ENCODE measurements at regions of chr2 and their contacts with region 1.

Region 1: DNA sequence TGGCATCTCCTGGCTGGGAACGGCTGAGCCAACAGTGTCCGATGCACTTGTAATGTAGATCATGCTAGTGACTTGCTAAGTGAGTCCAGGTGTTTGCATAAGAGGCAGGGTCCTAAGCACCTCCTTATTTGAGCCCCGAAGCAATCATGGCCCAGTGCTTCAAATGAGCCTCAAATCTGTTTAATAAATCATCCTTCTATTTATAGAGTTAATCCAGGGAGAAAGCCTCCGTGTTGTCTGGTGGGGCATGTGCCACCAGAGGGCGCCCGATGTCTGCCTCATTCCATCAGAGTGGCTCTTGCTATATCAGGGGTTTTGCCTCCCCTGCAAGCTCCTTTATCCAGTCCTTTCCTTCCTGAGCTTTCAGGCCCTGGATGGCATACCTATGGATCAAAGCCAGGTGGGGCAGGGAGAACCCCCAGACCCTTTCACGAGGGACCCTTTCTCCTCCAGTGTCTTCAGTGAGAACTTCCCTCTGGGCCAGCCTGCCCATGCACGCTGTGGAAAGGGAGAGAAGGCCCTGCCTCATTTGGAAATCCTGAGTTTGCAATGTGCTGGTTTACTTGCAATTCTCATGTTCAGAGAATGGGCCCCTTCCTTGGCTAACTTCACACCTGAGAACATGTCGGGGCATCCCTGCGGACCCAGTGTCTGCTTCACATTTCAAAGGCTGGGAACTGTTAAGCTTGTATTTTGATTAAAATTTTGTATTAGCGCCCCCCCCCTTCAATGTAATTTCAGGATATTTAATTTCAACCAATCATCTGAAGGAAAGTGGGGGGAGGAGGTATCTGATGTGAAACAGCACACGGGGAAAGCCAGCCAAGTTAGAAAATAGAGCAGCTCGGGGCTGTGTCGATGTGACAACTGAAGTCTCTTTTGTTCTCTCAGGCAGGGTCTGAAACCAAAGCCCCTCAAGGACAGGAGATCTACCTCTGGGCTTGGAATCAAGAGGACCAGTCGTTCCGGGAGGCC is 39.7 kb downstream of the RDH14 start:
- DNase-seq: peak; percentile 63 to 93
- H3K4me3 ChIP-seq: no peak overlapping the region
- H3K27ac ChIP-seq: no peak overlapping the region
- H3K4me1 ChIP-seq: peaks cover 0 to 3% (median 0%) of the 10 kb centered on the region in 4 experiments; a peak in 4 of 7 replicates
- H3K27me3 ChIP-seq: no peaks in the 10 kb centered on the region
- CTCF ChIP-seq: peak; percentile 79 to 91 (median 85)
- EP300 ChIP-seq: no peak
- POLR2A ChIP-seq: no peak
- RAD21 ChIP-seq: peak; percentile 97 to 99

Region 2: GRCh38 chr2:18435421-18436037 is 85.2 kb before region 1 on chr2:
- CTCF ChIA-PET with region 1: interaction called, 10 read pairs
- POLR2A ChIA-PET with region 1: no interaction called
- DNase-seq: peak in 1 of 2 experiments; percentile 53
- H3K4me3 ChIP-seq: no peak overlapping the region
- H3K27ac ChIP-seq: no peak overlapping the region
- H3K4me1 ChIP-seq: no peaks in the 10 kb centered on the region
- H3K27me3 ChIP-seq: no peaks in the 10 kb centered on the region
- CTCF ChIP-seq: peak in 2 of 3 experiments; percentile 46 to 69; a peak in 2 of 4 replicates
- EP300 ChIP-seq: no peak
- POLR2A ChIP-seq: no peak
- RAD21 ChIP-seq: peak; percentile 80 to 83

Region 3: GRCh38 chr2:18484625-18485024 is 36.1 kb before region 1 on chr2:
- CTCF ChIA-PET with region 1: no interaction called
- POLR2A ChIA-PET with region 1: no interaction called
- DNase-seq: no peak
- H3K4me3 ChIP-seq: no peak overlapping the region
- H3K27ac ChIP-seq: no peak overlapping the region
- H3K4me1 ChIP-seq: no peaks in the 10 kb centered on the region
- H3K27me3 ChIP-seq: no peaks in the 10 kb centered on the region
- CTCF ChIP-seq: no peak
- EP300 ChIP-seq: no peak
- POLR2A ChIP-seq: no peak
- RAD21 ChIP-seq: no peak

Region 4: GRCh38 chr2:18552351-18553077 is 31.8 kb after region 1 on chr2:
- CTCF ChIA-PET with region 1: interaction called, 17 read pairs
- POLR2A ChIA-PET with region 1: no interaction called
- DNase-seq: no peak
- H3K4me3 ChIP-seq: no peak overlapping the region
- H3K27ac ChIP-seq: no peak overlapping the region
- H3K4me1 ChIP-seq: peaks cover 0 to 2% (median 0%) of the 10 kb centered on the region in 4 experiments; a peak in 1 of 7 replicates
- H3K27me3 ChIP-seq: no peaks in the 10 kb centered on the region
- CTCF ChIP-seq: no peak
- EP300 ChIP-seq: no peak
- POLR2A ChIP-seq: no peak
- RAD21 ChIP-seq: no peak

Region 5: DNA sequence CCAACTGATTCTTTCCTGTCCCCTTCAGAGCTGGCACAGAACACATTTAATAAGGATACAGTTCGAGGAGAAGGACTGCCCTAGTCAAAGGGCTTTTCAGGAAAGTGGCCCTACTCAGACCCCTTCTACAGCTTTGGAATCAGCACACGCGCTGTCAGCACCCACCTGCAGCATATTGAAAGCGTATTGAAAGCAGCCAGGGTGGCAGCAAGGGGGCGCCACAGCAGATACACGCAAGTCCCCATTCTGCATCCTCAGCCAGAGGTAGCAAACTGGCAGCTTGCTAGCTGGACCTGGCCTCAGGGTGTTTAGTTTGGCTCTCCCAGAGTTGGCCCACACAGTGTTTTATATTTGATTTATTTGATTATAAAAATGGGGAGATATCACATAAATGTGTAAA is 169.6 kb after region 1 on chr2:
- CTCF ChIA-PET with region 1: interaction called, 27 read pairs
- POLR2A ChIA-PET with region 1: no interaction called
- DNase-seq: peak; percentile 47 to 76
- H3K4me3 ChIP-seq: no peak overlapping the region
- H3K27ac ChIP-seq: no peak overlapping the region
- H3K4me1 ChIP-seq: no peaks in the 10 kb centered on the region
- H3K27me3 ChIP-seq: no peaks in the 10 kb centered on the region
- CTCF ChIP-seq: peak; percentile 75 to 95 (median 93)
- EP300 ChIP-seq: no peak
- POLR2A ChIP-seq: no peak
- RAD21 ChIP-seq: peak; percentile 61 to 67

Region 6: GRCh38 chr2:18749912-18750526 is 229.3 kb after region 1 on chr2:
- CTCF ChIA-PET with region 1: interaction called, 52 read pairs
- POLR2A ChIA-PET with region 1: no interaction called
- DNase-seq: peak in 1 of 2 experiments; percentile 54
- H3K4me3 ChIP-seq: no peak overlapping the region
- H3K27ac ChIP-seq: no peak overlapping the region
- H3K4me1 ChIP-seq: no peaks in the 10 kb centered on the region
- H3K27me3 ChIP-seq: no peaks in the 10 kb centered on the region
- CTCF ChIP-seq: peak in 2 of 3 experiments; percentile 35 to 48; a peak in 2 of 4 replicates
- EP300 ChIP-seq: no peak
- POLR2A ChIP-seq: no peak
- RAD21 ChIP-seq: peak; percentile 77 to 84

Region 7: GRCh38 chr2:19369341-19369955 is 848.7 kb after region 1 on chr2:
- CTCF ChIA-PET with region 1: interaction called, 11 read pairs
- POLR2A ChIA-PET with region 1: no interaction called
- DNase-seq: no peak
- H3K4me3 ChIP-seq: no peak overlapping the region
- H3K27ac ChIP-seq: no peak overlapping the region
- H3K4me1 ChIP-seq: no peaks in the 10 kb centered on the region
- H3K27me3 ChIP-seq: peaks cover 2 to 17% (median 8%) of the 10 kb centered on the region in 4 experiments
- CTCF ChIP-seq: peak; percentile 17 to 74 (median 51)
- EP300 ChIP-seq: no peak
- POLR2A ChIP-seq: no peak
- RAD21 ChIP-seq: peak; percentile 76 to 83